ENCODE measurements at regions of chr9 and their contacts with region 1.

Region 1: GRCh38 chr9:131046581-131047202 is 37.7 kb downstream of the LAMC3 start:
- DNase-seq: peak; percentile 88
- H3K4me3 ChIP-seq: no peak overlapping the region
- H3K27ac ChIP-seq: no peak overlapping the region
- H3K4me1 ChIP-seq: no peaks in the 10 kb centered on the region
- H3K27me3 ChIP-seq: no peaks in the 10 kb centered on the region
- CTCF ChIP-seq: peak; percentile 88 to 94 (median 89)
- POLR2A ChIP-seq: no peak

Region 2: DNA sequence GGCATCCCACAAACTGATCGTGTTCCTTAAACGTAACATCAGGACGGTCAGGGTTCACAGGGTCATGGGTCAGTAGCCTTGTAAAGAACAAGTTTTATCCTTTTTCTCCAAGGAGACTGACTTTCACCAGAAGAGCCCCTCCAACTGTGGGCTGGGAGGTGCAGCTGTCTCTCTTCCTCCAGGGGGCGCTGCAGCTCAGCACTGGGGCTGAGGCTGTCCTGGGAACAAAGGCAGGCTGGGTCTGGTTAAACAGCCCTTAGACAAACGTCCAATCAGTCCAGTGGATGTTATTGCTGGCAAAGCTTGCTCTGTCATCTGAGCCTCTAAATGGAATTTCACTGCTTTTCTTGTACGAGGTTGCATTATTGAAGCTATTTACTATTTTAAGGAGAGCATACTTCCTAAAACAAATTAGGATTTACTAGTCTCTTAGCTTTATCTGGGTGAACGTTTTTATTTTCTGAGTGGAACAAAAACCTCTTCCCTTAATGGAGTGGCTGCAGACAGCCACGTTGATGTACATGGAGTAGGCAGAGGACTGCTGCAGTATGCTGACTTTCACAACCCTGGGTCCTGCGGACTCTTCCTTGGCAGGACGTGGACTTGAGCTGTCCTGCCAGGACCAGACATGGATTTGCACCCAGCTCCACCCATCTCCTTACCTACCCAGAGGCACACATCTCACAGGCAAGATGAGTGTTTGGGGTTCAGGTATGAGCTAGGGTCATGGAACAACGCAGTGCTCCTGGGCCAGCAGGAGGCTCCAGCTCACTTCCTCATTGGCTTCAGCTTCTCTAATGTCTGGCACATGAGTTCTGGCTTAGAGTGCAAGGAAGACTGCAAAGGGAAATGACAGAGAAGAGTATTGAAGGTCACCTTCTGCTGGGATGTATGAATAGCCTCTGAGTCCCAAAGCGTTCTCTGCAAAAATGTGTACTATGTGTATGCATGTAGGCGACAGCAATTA is 345.4 kb before region 1 on chr9:
- intact Hi-C with region 1: loop called (anchors 10 kb)
- DNase-seq: peak; percentile 88
- H3K4me3 ChIP-seq: no peak overlapping the region
- H3K27ac ChIP-seq: peak overlapping the region in 1 of 2 donors; percentile 27
- H3K4me1 ChIP-seq: peaks cover 12% of the 10 kb centered on the region
- H3K27me3 ChIP-seq: no peaks in the 10 kb centered on the region
- CTCF ChIP-seq: peak; percentile 88 to 98 (median 91)
- POLR2A ChIP-seq: no peak

Region 3: GRCh38 chr9:131012396-131012917 is 34.2 kb before region 1 on chr9:
- intact Hi-C with region 1: loop called (anchors 5 kb)
- DNase-seq: peak; percentile 58
- H3K4me3 ChIP-seq: no peak overlapping the region
- H3K27ac ChIP-seq: peak overlapping the region; percentile 6 to 74
- H3K4me1 ChIP-seq: peaks cover 37% of the 10 kb centered on the region
- H3K27me3 ChIP-seq: no peaks in the 10 kb centered on the region
- CTCF ChIP-seq: no peak
- POLR2A ChIP-seq: no peak

Region 4: GRCh38 chr9:131153595-131153994 is 106.9 kb after region 1 on chr9:
- intact Hi-C with region 1: no loop called
- DNase-seq: no peak
- H3K4me3 ChIP-seq: no peak overlapping the region
- H3K27ac ChIP-seq: no peak overlapping the region
- H3K4me1 ChIP-seq: no peaks in the 10 kb centered on the region
- H3K27me3 ChIP-seq: no peaks in the 10 kb centered on the region
- CTCF ChIP-seq: no peak
- POLR2A ChIP-seq: no peak

Region 5: GRCh38 chr9:131502781-131503625 is 456.3 kb after region 1 on chr9 and contains the start of gene POMT1:
- intact Hi-C with region 1: no loop called
- DNase-seq: peak; percentile 88
- H3K4me3 ChIP-seq: peak within 1 kb of the TSS; percentile 87 to 92
- H3K27ac ChIP-seq: peak within 1 kb of the TSS; percentile 39 to 87
- H3K4me1 ChIP-seq: peaks cover 7% of the 10 kb centered on the region
- H3K27me3 ChIP-seq: no peaks in the 10 kb centered on the region
- CTCF ChIP-seq: no peak
- POLR2A ChIP-seq: no peak
- total RNA-seq, gene POMT1: 99.7 to 117 TPM